ENCODE measurements at regions of chr12 and their contacts with region 1.

Region 1: DNA sequence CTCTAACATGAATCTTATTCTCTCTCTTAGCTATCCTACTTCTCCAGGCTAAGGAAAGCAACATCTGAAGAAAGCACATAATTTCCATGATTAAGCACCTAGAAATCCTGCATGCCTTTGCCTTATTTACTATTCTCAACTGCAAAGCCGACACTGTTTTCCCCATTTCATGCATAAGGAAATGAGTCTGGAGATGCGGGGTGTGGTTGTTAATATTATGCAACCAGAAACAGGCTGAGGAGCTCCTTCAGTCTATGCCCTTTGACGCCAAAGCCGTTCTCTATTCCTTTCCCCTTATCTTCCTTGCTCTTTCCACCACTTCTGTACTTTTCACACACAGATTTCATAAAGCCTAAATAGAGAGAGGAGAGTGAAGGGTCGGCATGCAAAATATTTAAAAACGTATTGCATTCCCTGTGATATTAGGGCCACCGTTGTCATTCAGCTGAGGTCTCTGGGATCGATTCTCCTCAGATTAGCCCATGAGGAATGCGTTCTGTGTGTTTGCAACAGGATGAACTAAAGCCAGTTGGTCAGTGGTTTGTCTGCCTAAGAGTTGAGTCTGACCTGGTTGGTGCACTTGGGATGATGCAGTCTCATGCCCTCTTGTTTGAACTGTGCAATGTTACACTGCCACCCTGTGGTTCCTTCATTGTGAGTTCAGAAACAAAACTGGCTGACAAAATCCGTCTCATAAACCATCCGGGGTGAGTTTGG is 53.1 kb upstream of the PLEKHG7 start:
- DNase-seq: peak in 4 of 5 donors; percentile 22 to 61 (median 36)
- H3K4me3 ChIP-seq: no peak overlapping the region
- H3K27ac ChIP-seq: no peak overlapping the region
- H3K4me1 ChIP-seq: no peaks in the 10 kb centered on the region
- H3K27me3 ChIP-seq: no peaks in the 10 kb centered on the region
- CTCF ChIP-seq: peak; percentile 32 to 66 (median 42)
- EP300 ChIP-seq: no peak
- POLR2A ChIP-seq: no peak

Region 2: DNA sequence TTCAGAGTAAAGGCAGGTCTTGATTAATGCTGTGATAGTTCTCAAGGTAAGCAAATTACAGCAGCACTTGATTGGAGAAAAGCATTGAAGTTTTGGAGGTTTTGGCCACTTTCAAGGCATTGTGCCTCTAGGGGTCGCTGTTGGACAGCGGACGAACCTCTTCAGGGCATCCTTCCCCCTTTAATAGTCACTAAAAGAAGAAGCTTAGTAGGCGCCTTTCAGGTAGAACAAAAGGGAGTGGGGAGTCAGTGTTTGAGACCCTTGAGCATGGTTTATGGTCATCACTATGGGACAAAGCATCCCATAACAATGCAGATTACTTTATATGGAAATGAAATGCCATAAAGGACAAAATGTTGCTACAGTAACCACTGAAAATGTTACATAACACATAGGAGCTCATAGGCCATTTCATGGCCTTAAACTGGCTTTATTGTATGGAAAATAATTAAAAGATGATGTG is 1267.6 kb before region 1 on chr12:
- intact Hi-C with region 1: loop called in 1 of 4 experiments (anchors 10 kb)
- DNase-seq: peak; percentile 75 to 88 (median 84)
- H3K4me3 ChIP-seq: peak overlapping the region; percentile 19
- H3K27ac ChIP-seq: peak overlapping the region in 1 of 2 donors; percentile 46
- H3K4me1 ChIP-seq: no peaks in the 10 kb centered on the region
- H3K27me3 ChIP-seq: no peaks in the 10 kb centered on the region
- CTCF ChIP-seq: peak; percentile 66 to 78 (median 77)
- EP300 ChIP-seq: no peak
- POLR2A ChIP-seq: no peak